HCT116 (cell line): ENCODE measurements at regions of chr7 and their contacts with region 1.

Region 1: GRCh38 chr7:28096713-28097112 is 83.9 kb downstream of the JAZF1 start:
- DNase-seq: peak; percentile 42
- ATAC-seq: peak; percentile 74
- H3K4me3 ChIP-seq: no peak overlapping the region
- H3K27ac ChIP-seq: no peak overlapping the region
- H3K4me1 ChIP-seq: no peaks in the 10 kb centered on the region
- H3K27me3 ChIP-seq: no peaks in the 10 kb centered on the region
- CTCF ChIP-seq: peak; percentile 49 to 91 (median 70); a peak in 5 of 6 replicates
- POLR2A ChIP-seq: no peak
- RAD21 ChIP-seq: peak; percentile 77

Region 2: GRCh38 chr7:27689591-27690164 is 407.0 kb before region 1 on chr7:
- CTCF ChIA-PET with region 1: interaction called, 6 read pairs
- POLR2A ChIA-PET with region 1: no interaction called
- RAD21 ChIA-PET with region 1: no interaction called
- intact Hi-C with region 1: loop called (anchors 10 kb)
- DNase-seq: no peak
- ATAC-seq: peak; percentile 95
- H3K4me3 ChIP-seq: no peak overlapping the region
- H3K27ac ChIP-seq: no peak overlapping the region
- H3K4me1 ChIP-seq: peaks cover 0 to 13% of the 10 kb centered on the region in 2 experiments; a peak in 2 of 4 replicates
- H3K27me3 ChIP-seq: no peaks in the 10 kb centered on the region
- CTCF ChIP-seq: peak; percentile 53 to 69 (median 66)
- POLR2A ChIP-seq: no peak
- RAD21 ChIP-seq: peak; percentile 85

Region 3: DNA sequence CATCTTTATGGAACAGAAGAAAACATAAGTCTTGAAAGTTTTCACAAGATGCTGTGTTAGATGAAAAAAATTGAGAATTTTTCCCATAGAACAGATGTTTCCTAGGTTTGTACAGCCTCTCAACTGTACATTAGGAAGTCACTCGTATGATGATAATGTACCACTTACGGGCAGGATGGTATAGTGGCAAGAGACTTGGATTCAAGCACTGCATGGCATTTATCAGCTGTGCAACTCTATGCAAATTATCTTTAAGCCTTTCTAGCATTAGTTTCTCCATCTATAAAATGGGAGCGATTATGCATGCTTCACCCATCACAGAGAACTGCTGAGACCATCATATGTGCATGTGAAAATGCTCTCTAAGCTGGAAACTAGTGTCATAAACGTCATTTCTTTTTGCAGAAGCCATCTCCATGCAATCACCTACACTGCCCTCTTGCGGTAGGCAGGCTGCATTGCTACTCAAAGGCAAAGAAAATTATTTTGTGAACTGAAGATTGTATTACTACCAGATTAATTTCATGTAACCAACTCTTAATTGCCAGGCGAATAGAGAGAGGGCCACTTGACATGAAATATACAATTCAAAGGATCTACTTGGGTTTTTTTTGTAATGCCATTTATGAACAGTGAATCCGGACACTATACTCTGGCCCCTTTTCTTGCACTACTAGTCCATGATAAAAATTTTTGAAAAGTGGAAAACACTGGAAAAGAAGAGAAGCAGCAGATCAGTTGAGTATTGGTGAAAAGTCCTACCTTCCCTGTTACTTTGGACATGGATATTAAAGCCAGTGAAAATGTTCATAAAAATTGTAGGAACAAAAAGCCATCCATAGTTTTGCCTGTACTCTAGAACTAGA is 18.4 kb before region 1 on chr7:
- CTCF ChIA-PET with region 1: interaction called, 18 read pairs
- POLR2A ChIA-PET with region 1: no interaction called
- RAD21 ChIA-PET with region 1: no interaction called
- intact Hi-C with region 1: no loop called
- DNase-seq: peak; percentile 16
- ATAC-seq: peak; percentile 55
- H3K4me3 ChIP-seq: no peak overlapping the region
- H3K27ac ChIP-seq: no peak overlapping the region
- H3K4me1 ChIP-seq: no peaks in the 10 kb centered on the region
- H3K27me3 ChIP-seq: no peaks in the 10 kb centered on the region
- CTCF ChIP-seq: peak; percentile 49 to 99 (median 98); a peak in 5 of 6 replicates
- POLR2A ChIP-seq: no peak
- RAD21 ChIP-seq: peak; percentile 65

Region 4: DNA sequence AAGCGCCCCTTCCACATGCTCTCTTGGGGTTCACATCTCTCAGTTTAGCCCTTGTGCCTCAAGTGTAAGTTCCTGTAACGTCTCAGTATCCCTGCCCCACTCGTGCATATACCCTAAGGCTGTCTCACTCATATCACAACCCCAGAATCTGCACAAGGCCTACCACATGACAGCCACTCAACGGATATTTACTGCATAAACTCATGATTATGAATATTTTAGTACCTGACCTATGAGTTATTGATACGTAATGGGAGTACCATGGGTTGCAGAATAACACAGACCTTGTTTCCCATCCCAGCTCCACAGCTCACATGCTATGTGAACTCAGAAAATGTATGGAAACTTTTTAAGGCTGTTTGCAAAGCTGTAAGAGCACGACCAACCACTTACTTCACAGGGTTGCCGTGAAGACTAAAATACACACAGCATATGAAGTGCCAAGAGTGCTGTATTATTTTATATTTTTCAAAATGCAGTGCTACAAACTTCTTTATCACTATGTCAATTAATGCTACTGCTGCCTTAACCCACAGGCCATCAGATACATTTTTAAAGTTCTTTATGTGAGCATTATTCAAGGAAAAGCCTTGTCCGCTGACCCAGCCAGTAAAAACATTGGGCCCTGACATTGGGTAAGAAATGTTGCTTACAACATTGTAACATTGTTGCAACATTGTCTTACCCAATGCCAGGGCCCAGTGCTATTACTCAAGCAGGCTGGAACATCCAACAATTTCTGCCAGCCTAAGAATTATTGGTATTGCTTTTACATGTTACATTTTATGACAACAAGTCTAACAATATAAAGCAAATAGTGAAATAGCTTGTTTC is 13.3 kb before region 1 on chr7:
- CTCF ChIA-PET with region 1: interaction called, 18 read pairs
- POLR2A ChIA-PET with region 1: no interaction called
- RAD21 ChIA-PET with region 1: no interaction called
- intact Hi-C with region 1: no loop called
- DNase-seq: no peak
- ATAC-seq: no peak
- H3K4me3 ChIP-seq: no peak overlapping the region
- H3K27ac ChIP-seq: no peak overlapping the region
- H3K4me1 ChIP-seq: no peaks in the 10 kb centered on the region
- H3K27me3 ChIP-seq: no peaks in the 10 kb centered on the region
- CTCF ChIP-seq: no peak
- POLR2A ChIP-seq: no peak
- RAD21 ChIP-seq: no peak

Region 5: DNA sequence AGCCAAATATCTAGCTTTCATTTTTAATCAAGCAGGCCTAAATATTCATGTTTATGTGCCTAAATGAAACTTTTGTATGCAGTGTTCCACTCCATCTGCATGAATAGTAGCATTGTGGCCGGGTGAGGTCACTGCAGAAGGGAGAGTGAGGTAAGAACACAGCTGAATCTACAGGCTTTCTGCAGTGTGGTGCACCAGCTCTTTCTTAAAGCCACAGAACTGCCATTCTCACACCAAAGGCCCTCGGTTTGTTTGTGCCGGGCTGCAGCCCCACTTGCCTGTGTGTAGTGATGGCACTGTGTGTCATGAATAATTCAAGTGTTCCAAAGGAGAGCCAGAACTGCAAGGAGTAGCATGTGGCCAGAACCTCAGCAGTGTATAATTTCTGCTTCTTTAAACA is 657.3 kb after region 1 on chr7:
- CTCF ChIA-PET with region 1: no interaction called
- POLR2A ChIA-PET with region 1: no interaction called
- RAD21 ChIA-PET with region 1: no interaction called
- intact Hi-C with region 1: no loop called
- DNase-seq: no peak
- ATAC-seq: peak; percentile 71
- H3K4me3 ChIP-seq: no peak overlapping the region
- H3K27ac ChIP-seq: no peak overlapping the region
- H3K4me1 ChIP-seq: peaks cover 7 to 9% of the 10 kb centered on the region in 2 experiments
- H3K27me3 ChIP-seq: peaks cover 6% of the 10 kb centered on the region; the same call in 1 of the 2 replicates
- CTCF ChIP-seq: no peak; a peak in 1 of 6 replicates
- POLR2A ChIP-seq: no peak
- RAD21 ChIP-seq: no peak